Aorta (tissue), 5 donors: ENCODE measurements at regions of chr3 and their contacts with region 1.

Region 1: GRCh38 chr3:186413615-186414415 is 51.8 kb upstream of the DGKG start:
- DNase-seq: peak in 1 of 2 donors; percentile 80
- ATAC-seq: peak; percentile 75
- H3K4me3 ChIP-seq: peak overlapping the region; percentile 10 to 50
- H3K27ac ChIP-seq: peak overlapping the region in 1 of 2 donors; percentile 9
- H3K4me1 ChIP-seq: no peaks in the 10 kb centered on the region
- H3K27me3 ChIP-seq: no peaks in the 10 kb centered on the region

Region 2: DNA sequence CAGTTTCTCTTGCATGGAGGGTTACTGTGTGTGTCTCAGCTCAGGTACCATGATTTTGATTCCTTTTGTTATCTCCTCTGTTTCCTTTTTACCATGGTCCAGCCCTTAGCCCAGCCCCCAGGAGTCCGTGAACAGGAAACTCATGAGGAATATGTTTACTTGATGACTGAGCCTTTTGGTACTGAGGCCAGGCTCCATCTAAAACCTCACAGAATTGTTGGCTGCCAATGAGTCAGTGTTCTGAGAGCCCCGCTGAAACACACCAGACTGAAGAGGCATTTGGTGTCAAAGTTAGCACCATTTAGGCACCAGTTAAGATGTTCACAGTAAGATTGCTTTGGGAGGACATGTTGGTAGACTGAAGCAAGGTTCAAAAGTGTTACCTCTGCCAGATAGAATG is 132.6 kb before region 1 on chr3:
- intact Hi-C with region 1: loop called (anchors 10 kb)
- DNase-seq: peak in 1 of 2 donors; percentile 51
- ATAC-seq: peak; percentile 57
- H3K4me3 ChIP-seq: peak overlapping the region in 1 of 2 donors; percentile 19
- H3K27ac ChIP-seq: peak overlapping the region; percentile 58 to 67
- H3K4me1 ChIP-seq: peaks cover 3% of the 10 kb centered on the region in 2 donors
- H3K27me3 ChIP-seq: no peaks in the 10 kb centered on the region

Region 3: DNA sequence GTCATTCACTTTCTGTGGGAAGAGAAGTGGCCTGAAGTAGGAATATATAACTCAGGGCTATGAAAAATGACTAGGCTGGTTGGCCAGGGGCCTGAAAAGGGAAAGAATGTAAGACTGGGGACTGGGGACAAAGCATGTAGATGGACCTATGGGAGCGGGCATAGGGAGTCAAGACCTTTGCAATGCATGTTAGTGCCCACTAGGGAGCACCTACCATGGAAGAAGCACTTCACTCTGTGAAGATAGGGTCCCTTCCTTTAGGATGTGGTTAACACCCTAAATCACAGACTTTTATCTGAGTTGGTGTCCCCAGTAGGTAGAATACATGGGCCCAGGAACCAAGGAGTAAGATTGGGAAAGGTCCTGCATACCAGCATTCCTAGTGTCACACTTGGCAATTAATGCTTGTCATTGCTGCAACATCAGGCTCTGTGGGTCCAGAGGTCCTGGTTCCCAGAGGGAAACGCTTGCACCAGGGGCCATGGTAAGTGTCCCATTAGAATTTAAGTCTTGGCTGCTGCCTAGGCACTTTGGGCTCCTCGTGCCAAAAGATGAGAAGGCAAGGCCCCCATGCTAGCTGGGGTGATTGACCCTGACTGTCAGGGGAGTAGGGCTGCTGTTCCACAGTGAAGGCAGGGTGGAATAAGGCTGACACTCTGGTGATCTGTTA is 50.7 kb after region 1 on chr3:
- intact Hi-C with region 1: no loop called
- DNase-seq: no peak
- ATAC-seq: no peak
- H3K4me3 ChIP-seq: no peak overlapping the region
- H3K27ac ChIP-seq: no peak overlapping the region
- H3K4me1 ChIP-seq: no peaks in the 10 kb centered on the region
- H3K27me3 ChIP-seq: no peaks in the 10 kb centered on the region